A673 (cell line): ENCODE measurements at regions of chr2 and their contacts with region 1.

Region 1: DNA sequence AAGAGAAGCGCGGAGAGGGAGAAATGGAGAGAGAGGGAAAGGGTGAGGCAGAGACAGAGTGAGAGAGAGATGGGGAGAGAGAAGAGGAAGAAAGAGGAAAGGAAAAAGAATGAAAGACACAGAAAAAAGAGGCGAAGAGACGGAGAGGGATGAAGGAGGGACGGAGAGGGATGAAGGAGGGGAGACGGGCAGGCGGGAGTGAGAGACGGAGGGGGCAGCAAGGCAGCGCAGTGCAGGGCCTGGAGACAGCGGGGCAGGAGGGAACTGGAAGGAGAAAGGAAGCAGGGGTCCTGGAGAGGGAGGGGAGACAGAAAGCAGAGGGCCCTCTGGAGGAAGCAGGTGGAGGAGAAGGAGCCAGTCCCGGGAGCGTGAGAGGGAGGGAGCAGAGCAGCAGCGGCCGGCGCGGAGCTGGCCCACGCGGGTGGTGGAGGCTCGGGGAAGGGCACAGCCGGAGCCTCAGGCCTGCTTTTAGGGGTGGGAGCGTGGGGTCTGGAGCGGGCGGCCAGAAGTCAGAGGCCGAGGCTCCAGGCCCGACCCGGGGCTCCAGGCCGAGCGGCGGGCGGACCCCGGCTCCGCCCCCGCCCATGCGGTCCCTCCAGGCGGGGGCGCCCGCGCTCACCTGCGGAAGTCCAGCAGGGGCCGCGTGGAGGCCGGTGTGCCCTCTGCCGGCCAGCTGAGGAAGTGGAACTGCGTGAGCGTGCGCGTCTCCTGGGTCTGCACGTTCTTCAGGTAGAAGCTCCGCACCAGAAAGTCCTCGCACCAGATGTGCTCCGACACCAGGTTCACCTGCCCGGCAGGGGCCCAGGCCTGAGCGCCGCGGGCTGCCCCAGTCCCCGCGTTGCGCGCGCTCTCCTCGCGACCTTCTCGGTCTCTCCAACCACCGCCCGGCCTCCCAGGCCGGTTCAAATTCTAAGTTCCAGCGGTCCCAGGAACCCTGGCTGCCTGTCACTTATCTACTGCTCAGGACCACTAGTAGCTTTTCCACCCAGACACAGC is 14.5 kb downstream of the PTPRN start:
- DNase-seq: peak; percentile 84
- H3K4me3 ChIP-seq: peak overlapping the region; percentile 59
- H3K27ac ChIP-seq: peak overlapping the region; percentile 56
- H3K4me1 ChIP-seq: peaks cover 4% of the 10 kb centered on the region
- H3K27me3 ChIP-seq: peaks cover 9% of the 10 kb centered on the region
- CTCF ChIP-seq: peak; percentile 92

Region 2: DNA sequence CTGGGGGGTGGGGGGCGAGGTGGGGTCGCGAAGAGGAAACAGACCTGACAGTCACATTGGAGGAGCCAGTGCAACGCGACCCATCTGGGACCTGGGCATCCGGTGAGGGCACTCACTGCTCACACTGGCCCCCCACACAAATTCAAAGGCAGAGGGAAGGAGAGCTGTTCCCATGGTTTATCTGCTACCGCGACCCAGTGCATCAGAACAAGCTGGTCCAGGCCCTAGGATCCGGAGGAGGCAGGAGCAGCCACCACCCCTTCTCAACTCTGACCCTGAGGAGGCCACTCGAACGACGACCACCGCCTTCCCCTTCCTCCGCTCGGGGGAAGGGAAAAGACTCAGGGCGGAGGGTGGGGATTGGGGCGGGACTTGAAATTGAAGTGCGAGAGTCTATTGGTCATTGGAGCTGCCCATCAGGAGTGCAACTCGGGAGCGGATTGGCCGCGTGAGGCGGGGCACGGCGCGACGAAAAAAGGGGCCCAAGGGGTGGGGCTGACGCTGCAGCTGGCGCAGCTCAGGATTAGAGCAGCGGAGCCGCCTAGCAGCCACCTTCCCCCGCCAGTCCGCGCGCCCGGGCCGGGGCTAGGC is 335.4 kb before region 1 on chr2 and contains the start of gene CDK5R2:
- CTCF ChIA-PET with region 1: no interaction called
- POLR2A ChIA-PET with region 1: no interaction called
- intact Hi-C with region 1: no loop called
- DNase-seq: peak; percentile 95
- H3K4me3 ChIP-seq: peak within 1 kb of the TSS; percentile 53
- H3K27ac ChIP-seq: no peak within 1 kb of the TSS
- H3K4me1 ChIP-seq: peaks cover 24% of the 10 kb centered on the region
- H3K27me3 ChIP-seq: peaks cover 29% of the 10 kb centered on the region
- CTCF ChIP-seq: no peak
- total RNA-seq, gene CDK5R2: 0.37 and 0.44 TPM in 2 replicates

Region 3: DNA sequence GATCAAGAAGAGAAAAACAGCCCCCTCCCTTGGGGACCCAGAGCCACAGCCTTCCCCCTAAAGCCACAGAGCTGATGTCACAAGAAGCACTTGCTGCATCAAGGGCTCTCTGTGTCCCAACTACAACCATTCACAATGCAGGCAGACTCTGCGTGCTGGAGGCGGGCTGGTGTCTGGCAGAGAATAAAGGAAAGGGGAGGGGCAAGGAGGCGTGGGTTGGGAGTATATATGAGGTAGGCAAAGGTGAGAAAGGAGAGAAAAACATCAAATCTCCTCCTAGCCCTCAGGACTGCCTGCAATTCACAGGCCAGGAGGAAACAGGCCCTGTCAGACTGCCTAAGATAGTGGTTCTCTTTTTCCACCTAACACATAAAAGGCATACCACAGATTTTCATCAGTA is 185.2 kb before region 1 on chr2:
- CTCF ChIA-PET with region 1: no interaction called
- POLR2A ChIA-PET with region 1: no interaction called
- intact Hi-C with region 1: no loop called
- DNase-seq: no peak
- H3K4me3 ChIP-seq: no peak overlapping the region
- H3K27ac ChIP-seq: no peak overlapping the region
- H3K4me1 ChIP-seq: no peaks in the 10 kb centered on the region
- H3K27me3 ChIP-seq: no peaks in the 10 kb centered on the region
- CTCF ChIP-seq: no peak

Region 4: DNA sequence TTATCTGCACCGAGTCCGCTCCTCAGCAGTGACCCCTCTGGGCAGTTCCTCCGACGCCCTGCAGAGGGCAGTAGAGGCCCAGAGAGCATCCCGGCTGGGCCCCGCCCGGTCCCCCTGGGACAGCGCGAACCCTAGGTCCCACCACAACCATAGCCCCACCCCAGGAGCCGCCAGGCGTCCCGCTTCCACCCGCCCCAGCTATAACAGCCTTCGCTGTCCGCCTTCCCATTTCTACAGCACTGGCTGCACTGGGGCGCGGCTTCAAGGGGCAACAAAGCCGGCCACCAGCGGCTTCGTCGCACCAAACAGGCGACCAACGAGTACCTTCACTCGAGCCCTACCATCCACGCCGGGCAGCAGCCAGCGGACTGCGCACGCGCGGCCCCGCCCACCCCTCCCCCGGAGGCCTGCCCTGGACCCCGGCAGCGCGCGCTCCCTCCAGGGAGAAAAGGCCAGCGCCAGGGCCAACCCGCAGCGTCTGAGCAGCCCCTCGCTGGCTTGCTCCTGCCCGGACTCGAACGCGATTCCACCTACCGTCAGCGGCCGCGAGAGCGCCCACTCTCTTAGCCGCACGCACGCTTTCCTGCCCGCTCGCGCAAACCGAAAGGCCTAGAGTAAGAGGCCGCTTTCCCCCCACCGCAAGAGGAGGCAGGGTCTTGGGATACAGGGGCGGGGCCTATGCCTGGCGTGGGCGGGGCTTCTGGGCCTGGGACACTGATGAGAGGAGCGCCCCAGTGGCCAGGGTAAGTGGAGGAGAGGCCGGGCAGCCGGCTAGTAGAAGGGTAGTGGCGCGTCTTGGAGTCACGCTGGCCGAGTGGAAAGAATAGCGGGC is 134.3 kb before region 1 on chr2 and contains the start of gene NHEJ1:
- CTCF ChIA-PET with region 1: interaction called, 4 read pairs
- POLR2A ChIA-PET with region 1: no interaction called
- intact Hi-C with region 1: loop called (anchors 1 kb)
- DNase-seq: peak; percentile 92
- H3K4me3 ChIP-seq: peak within 1 kb of the TSS; percentile 68
- H3K27ac ChIP-seq: peak within 1 kb of the TSS; percentile 89
- H3K4me1 ChIP-seq: peaks cover 4% of the 10 kb centered on the region
- H3K27me3 ChIP-seq: no peaks in the 10 kb centered on the region
- CTCF ChIP-seq: peak; percentile 98
- total RNA-seq, gene NHEJ1: 16.6 and 18.0 TPM in 2 replicates

Region 5: DNA sequence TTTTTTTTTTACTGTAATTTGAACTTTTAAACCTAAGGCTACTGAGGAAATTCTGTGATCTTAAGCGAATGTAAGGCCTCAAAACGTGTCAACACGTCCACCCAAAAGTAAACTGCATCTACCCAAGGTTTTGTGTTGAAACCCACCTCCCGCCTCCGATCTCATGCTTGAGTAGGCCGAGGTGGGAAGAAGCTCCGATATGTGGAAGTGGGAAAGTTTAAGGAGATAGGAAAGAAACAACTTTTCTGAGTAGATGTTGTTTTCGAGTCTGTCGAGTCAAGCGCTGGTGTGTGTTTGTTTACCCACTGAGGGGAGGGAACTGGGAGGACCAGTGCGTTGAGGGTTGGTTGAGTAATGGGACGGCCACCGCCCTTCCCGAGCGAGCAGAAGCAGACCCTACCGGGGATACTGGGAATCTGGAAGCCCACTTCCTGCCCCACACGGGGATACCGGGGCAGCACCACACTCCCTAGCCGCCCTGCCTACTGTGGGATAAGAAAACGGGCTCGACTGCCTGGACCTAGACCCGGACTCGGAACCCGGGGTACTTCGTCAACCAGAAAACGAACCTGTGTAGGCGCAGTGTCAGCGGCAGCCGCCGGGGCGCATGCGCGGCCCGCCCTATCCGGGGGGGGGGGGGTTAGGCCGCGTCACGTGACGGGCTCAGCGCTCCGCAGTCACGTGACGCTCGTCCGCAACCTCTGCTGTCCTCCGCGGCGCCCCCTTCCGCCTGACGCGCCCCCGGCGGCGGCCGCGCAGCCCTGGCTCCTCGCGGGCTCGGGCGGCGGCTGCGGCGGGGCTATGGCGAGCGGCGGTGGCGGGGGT is 116.9 kb before region 1 on chr2 and contains the start of gene RETREG2:
- CTCF ChIA-PET with region 1: interaction called, 7 read pairs
- POLR2A ChIA-PET with region 1: interaction called, 6 read pairs
- intact Hi-C with region 1: loop called (anchors 5 kb)
- DNase-seq: peak; percentile 89
- H3K4me3 ChIP-seq: peak within 1 kb of the TSS; percentile 96
- H3K27ac ChIP-seq: peak within 1 kb of the TSS; percentile 81
- H3K4me1 ChIP-seq: peaks cover 5% of the 10 kb centered on the region
- H3K27me3 ChIP-seq: no peaks in the 10 kb centered on the region
- CTCF ChIP-seq: 0 out of 2 replicates have a peak, but pooled peaks have one; percentile 31
- total RNA-seq, gene RETREG2: 53.1 and 59.0 TPM in 2 replicates

Region 6: DNA sequence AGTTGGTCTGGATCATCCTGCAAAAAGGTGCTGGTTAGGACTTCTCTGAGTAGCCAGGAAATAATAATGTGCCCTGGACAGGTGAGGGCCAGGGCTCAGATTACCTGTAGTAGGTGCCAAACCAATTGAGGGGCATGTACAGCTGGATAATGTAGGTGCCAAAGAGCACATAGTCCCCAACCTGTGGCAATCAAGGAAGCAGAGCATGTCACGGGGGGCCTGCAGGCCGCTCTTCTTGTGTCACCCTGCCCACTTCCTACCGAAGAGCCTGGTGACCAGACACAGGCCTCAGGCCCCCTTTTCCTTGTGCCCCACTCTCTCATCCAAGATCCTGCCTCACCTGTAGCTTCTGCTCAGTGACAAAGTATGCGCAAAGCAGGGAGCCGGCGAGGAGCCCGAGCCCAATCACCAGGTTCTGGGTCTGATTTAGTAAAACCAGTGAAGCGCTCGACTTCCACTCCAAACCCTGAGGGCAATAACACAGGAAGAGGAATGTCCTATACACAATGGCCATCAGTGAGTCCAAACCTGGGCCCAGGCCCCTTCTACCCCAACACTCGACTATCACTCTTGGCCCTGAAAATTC is 81.1 kb before region 1 on chr2:
- CTCF ChIA-PET with region 1: interaction called, 9 read pairs
- POLR2A ChIA-PET with region 1: no interaction called
- intact Hi-C with region 1: loop called (anchors 1 kb)
- DNase-seq: no peak
- H3K4me3 ChIP-seq: no peak overlapping the region
- H3K27ac ChIP-seq: no peak overlapping the region
- H3K4me1 ChIP-seq: peaks cover 19% of the 10 kb centered on the region
- H3K27me3 ChIP-seq: no peaks in the 10 kb centered on the region
- CTCF ChIP-seq: no peak

Region 7: GRCh38 chr2:219278655-219279516 is 15.8 kb before region 1 on chr2 and contains the start of gene DNAJB2:
- CTCF ChIA-PET with region 1: interaction called, 22 read pairs
- POLR2A ChIA-PET with region 1: no interaction called
- intact Hi-C with region 1: no loop called
- DNase-seq: peak; percentile 99
- H3K4me3 ChIP-seq: peak within 1 kb of the TSS; percentile 58
- H3K27ac ChIP-seq: peak within 1 kb of the TSS; percentile 90
- H3K4me1 ChIP-seq: peaks cover 20% of the 10 kb centered on the region
- H3K27me3 ChIP-seq: no peaks in the 10 kb centered on the region
- CTCF ChIP-seq: no peak
- total RNA-seq, gene DNAJB2: 24.4 and 24.6 TPM in 2 replicates

Region 8: DNA sequence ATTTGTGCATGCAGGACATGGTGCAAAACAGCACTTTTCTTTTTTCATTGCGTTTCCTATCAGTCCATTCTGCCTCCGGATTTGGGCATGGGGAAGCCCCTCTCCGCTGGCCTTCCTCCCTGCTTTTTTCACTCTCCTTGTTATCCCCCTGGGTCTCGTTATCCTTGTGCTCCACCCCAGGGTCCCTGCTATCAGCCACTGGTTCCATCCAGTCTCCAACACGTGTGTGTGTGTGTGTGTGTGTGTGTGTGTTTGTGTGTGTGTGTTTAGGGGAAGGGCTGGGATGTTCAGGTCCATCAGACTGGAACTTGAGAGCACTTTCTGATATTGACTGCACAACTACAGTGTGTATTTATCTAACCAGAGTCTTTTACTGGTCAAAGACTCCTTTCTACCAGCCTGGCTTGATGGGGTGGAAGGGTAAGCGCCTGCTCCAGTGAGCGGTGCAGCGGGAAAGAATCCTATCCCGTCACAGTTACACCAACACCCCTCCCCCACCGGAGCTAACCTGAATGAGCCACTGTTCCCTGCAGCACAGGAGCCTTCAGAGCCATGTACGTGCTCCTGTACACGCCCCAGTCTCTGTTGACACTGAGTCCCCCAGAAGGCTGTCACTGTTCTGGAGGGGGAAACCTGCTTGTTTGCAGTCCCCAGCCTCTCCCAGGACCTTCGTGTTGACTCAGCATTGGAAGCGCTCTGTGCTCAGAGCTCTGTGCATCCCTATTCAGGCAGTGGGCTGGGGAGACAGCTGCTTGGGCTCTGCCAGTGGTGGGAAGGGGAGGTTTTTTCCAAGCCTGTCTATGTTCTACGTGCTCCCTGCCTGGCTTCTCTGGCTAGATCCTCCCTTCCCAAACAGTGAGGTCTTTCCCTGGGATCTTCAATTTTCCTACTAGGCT is 282.1 kb after region 1 on chr2:
- CTCF ChIA-PET with region 1: no interaction called
- POLR2A ChIA-PET with region 1: no interaction called
- intact Hi-C with region 1: no loop called
- DNase-seq: no peak
- H3K4me3 ChIP-seq: no peak overlapping the region
- H3K27ac ChIP-seq: no peak overlapping the region
- H3K4me1 ChIP-seq: peaks cover 3% of the 10 kb centered on the region
- H3K27me3 ChIP-seq: no peaks in the 10 kb centered on the region
- CTCF ChIP-seq: no peak

Region 9: DNA sequence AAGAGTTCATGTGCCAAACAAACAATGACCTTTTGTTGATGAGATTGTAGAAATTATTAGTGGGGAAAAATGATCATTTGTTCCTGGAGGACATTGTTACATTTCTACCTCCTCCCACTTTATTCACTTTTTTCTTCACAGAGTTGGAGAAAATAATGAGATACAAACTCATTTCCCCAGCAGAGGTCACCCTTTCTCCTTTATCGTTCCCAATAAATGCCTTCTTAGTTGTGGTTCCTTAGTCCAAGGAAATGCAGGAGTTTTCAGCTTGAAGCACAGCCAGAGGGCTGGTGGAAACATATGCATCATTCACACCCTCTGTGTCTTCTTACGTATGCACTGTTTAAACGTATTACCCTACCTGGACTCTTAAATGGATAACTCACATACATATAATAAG is 441.6 kb after region 1 on chr2:
- CTCF ChIA-PET with region 1: no interaction called
- POLR2A ChIA-PET with region 1: no interaction called
- intact Hi-C with region 1: no loop called
- DNase-seq: peak; percentile 91
- H3K4me3 ChIP-seq: no peak overlapping the region
- H3K27ac ChIP-seq: no peak overlapping the region
- H3K4me1 ChIP-seq: peaks cover 19% of the 10 kb centered on the region
- H3K27me3 ChIP-seq: no peaks in the 10 kb centered on the region
- CTCF ChIP-seq: peak; percentile 64